Left lung (tissue), 14 donors: ENCODE measurements at regions of chr19 and their contacts with region 1.

Region 1: DNA sequence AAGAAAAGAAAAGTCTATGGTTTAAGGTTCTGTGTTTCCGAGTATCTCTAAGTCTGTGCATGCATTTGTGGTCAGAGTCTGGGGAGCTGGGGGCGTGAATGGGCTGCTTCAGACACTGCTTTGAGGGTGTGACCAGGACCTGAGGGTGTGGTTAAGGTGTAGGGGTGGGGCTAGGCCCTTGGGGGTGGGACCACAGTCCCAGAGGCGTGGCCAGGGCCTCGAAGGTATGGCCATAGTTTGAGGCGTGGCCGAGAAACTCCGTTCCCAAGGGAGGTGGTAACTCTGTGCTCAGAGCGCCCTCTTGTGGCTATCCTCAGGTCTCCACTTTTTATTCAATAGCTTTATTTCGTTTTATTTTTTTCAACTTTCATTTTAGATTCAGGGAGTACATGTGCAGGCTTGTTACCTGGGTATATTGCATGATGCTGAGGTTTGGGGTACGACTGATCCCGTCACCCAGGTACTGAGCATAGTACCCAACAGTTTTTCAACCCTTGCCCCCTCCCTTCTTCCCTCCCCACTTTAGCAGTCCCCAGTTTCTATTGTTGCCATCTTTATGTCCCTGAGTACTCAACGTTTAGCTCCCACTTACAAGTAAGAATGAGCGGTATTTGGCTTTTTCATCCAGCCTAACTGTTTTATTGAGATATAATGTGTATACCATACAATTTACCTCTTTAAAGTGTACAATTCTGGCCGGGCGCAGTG is 7.0 kb upstream of the CBLC start:
- DNase-seq: peak; percentile 82 to 97 (median 95)
- ATAC-seq: peak; percentile 100
- H3K4me3 ChIP-seq: no peak overlapping the region
- H3K27ac ChIP-seq: peak overlapping the region in 1 of 2 donors; percentile 73
- H3K4me1 ChIP-seq: peaks cover 0 to 51% of the 10 kb centered on the region in 2 donors
- H3K27me3 ChIP-seq: no peaks in the 10 kb centered on the region
- CTCF ChIP-seq: peak; percentile 76 to 81

Region 2: GRCh38 chr19:44689056-44689895 is 81.4 kb before region 1 on chr19:
- intact Hi-C with region 1: loop called in 1 of 2 experiments (anchors 5 kb)
- DNase-seq: peak; percentile 53 to 92 (median 80)
- ATAC-seq: peak; percentile 67
- H3K4me3 ChIP-seq: no peak overlapping the region
- H3K27ac ChIP-seq: no peak overlapping the region
- H3K4me1 ChIP-seq: peaks cover 27 to 87% of the 10 kb centered on the region in 2 donors
- H3K27me3 ChIP-seq: no peaks in the 10 kb centered on the region
- CTCF ChIP-seq: peak; percentile 90 to 96

Region 3: GRCh38 chr19:44723952-44724319 is 46.8 kb before region 1 on chr19:
- intact Hi-C with region 1: loop called in 1 of 2 experiments (anchors 2 kb)
- DNase-seq: peak; percentile 70 to 95 (median 86)
- ATAC-seq: peak; percentile 91
- H3K4me3 ChIP-seq: peak overlapping the region in 1 of 2 donors; percentile 16
- H3K27ac ChIP-seq: peak overlapping the region in 1 of 2 donors; percentile 40
- H3K4me1 ChIP-seq: peaks cover 24 to 81% of the 10 kb centered on the region in 2 donors
- H3K27me3 ChIP-seq: no peaks in the 10 kb centered on the region
- CTCF ChIP-seq: peak; percentile 96 to 98